ENCODE measurements at regions of chr11 and their contacts with region 1.

Region 1: DNA sequence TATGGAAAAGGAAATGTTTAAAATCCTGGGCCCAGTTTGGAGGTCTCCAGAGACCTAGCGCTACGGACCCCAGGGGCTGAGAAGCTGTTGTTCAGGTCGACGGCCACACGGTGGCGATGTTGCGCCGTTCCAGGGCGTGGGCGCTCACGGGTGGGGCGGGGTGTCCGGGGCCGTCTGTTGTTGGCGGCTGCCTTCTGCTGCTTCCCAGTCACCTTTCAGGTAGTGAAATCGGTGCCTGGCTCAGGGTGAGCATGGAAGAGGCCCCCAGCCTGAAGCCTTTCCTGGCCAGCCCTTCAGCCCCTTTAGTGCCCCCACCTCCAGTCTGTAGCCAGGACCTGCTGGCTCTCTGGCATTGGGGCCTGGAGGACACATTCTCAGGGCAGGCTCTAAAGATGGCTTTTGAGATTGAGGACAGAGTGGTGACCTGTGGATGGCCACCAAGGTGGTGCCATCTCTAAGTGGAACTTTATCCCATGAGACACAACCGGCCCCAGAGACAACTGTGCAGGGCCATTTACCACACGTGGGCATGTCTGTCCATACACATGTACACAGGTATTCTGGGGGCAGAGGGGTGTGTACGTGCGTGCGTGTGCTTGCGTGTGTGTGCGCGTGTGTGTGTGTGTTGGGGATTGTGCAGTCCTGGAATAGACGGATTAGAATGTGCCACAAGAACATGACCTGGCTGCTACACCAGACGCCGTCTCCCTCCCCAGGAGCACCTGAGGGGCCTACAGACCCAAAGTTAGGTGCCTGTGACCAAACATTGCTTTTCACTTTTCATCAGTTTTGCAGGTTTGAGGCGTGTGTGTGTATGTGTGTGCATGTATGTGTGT is 53.8 kb downstream of the ST14 start:
- DNase-seq: peak; percentile 81
- ATAC-seq: peak; percentile 98
- H3K4me3 ChIP-seq: no peak overlapping the region
- H3K4me3 Mint-ChIP-seq: no peak overlapping the region
- H3K27ac ChIP-seq: no peak overlapping the region
- H3K27ac Mint-ChIP-seq: peak overlapping the region; percentile 59
- H3K4me1 ChIP-seq: peaks cover 0 to 10% of the 10 kb centered on the region in 2 donors
- H3K4me1 Mint-ChIP-seq: peaks cover 11% of the 10 kb centered on the region
- H3K27me3 ChIP-seq: no peaks in the 10 kb centered on the region
- H3K27me3 Mint-ChIP-seq: peaks cover 4% of the 10 kb centered on the region
- CTCF ChIP-seq: peak; percentile 97

Region 2: GRCh38 chr11:129980086-129980485 is 233.3 kb before region 1 on chr11:
- CTCF ChIA-PET with region 1: no interaction called
- POLR2A ChIA-PET with region 1: interaction called, 14 read pairs
- intact Hi-C with region 1: no loop called
- DNase-seq: no peak
- ATAC-seq: no peak
- H3K4me3 ChIP-seq: no peak overlapping the region
- H3K4me3 Mint-ChIP-seq: no peak overlapping the region
- H3K27ac ChIP-seq: no peak overlapping the region
- H3K27ac Mint-ChIP-seq: no peak overlapping the region
- H3K4me1 ChIP-seq: no peaks in the 10 kb centered on the region
- H3K4me1 Mint-ChIP-seq: no peaks in the 10 kb centered on the region
- H3K27me3 ChIP-seq: peaks cover 0 to 19% (median 0%) of the 10 kb centered on the region in 4 experiments
- H3K27me3 Mint-ChIP-seq: peaks cover 12% of the 10 kb centered on the region
- CTCF ChIP-seq: no peak

Region 3: GRCh38 chr11:130145975-130146776 is 67.2 kb before region 1 on chr11:
- CTCF ChIA-PET with region 1: interaction called, 7 read pairs
- POLR2A ChIA-PET with region 1: no interaction called
- intact Hi-C with region 1: loop called (anchors 2 kb)
- DNase-seq: no peak
- ATAC-seq: peak; percentile 23
- H3K4me3 ChIP-seq: no peak overlapping the region
- H3K4me3 Mint-ChIP-seq: peak overlapping the region; percentile 30
- H3K27ac ChIP-seq: peak overlapping the region; percentile 61 to 75
- H3K27ac Mint-ChIP-seq: peak overlapping the region; percentile 68
- H3K4me1 ChIP-seq: peaks cover 16 to 34% of the 10 kb centered on the region in 2 donors
- H3K4me1 Mint-ChIP-seq: peaks cover 37% of the 10 kb centered on the region
- H3K27me3 ChIP-seq: no peaks in the 10 kb centered on the region
- H3K27me3 Mint-ChIP-seq: no peaks in the 10 kb centered on the region
- CTCF ChIP-seq: no peak

Region 4: GRCh38 chr11:130181295-130182272 is 31.8 kb before region 1 on chr11:
- CTCF ChIA-PET with region 1: interaction called, 13 read pairs
- POLR2A ChIA-PET with region 1: no interaction called
- intact Hi-C with region 1: no loop called
- DNase-seq: peak; percentile 79
- ATAC-seq: peak; percentile 84
- H3K4me3 ChIP-seq: no peak overlapping the region
- H3K4me3 Mint-ChIP-seq: peak overlapping the region; percentile 61
- H3K27ac ChIP-seq: peak overlapping the region; percentile 74 to 76
- H3K27ac Mint-ChIP-seq: peak overlapping the region; percentile 94
- H3K4me1 ChIP-seq: peaks cover 42 to 56% of the 10 kb centered on the region in 2 donors
- H3K4me1 Mint-ChIP-seq: peaks cover 56% of the 10 kb centered on the region
- H3K27me3 ChIP-seq: no peaks in the 10 kb centered on the region
- H3K27me3 Mint-ChIP-seq: no peaks in the 10 kb centered on the region
- CTCF ChIP-seq: no peak

Region 5: DNA sequence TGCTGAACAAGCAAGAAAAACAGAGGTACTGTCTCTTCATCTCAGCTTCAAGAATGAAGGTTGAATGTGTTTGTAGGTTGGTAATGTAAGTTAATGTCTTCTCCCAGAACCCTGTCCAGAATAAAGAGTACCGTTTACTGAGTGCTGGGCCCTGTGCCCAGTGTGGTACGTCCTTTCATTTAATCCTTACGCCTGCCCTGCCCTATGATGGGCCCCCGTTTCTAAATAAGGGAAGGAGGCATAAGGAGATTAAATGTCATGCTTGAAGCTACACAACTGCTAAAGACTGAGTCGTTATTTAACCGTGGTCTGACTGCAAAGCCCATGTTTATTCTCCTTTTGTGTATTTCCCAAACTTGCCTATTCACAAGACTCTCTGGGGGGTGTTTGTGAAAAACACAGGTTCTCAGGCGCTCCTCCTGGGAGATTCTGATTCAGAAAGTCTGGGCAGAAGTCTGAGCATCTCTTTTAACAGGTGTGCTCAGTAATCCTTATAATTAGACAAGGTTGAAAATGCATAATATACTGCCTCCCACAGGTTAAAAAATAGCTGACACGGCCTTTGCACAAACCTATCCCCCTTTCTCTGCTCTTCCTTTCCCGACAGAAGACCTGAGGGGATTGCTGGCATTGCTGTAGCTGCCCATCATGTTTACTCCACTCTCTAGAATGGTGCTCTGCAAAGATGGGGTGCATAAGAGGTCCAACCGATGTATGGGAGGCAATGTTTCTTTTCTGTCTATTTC is 157.7 kb after region 1 on chr11:
- CTCF ChIA-PET with region 1: interaction called, 29 read pairs
- POLR2A ChIA-PET with region 1: no interaction called
- intact Hi-C with region 1: loop called (anchors 1 kb)
- DNase-seq: no peak
- ATAC-seq: no peak
- H3K4me3 ChIP-seq: no peak overlapping the region
- H3K4me3 Mint-ChIP-seq: no peak overlapping the region
- H3K27ac ChIP-seq: no peak overlapping the region
- H3K27ac Mint-ChIP-seq: no peak overlapping the region
- H3K4me1 ChIP-seq: no peaks in the 10 kb centered on the region
- H3K4me1 Mint-ChIP-seq: no peaks in the 10 kb centered on the region
- H3K27me3 ChIP-seq: peaks cover 0 to 3% (median 0%) of the 10 kb centered on the region in 4 experiments
- H3K27me3 Mint-ChIP-seq: peaks cover 21% of the 10 kb centered on the region
- CTCF ChIP-seq: no peak

Region 6: GRCh38 chr11:130434521-130435223 is 221.3 kb after region 1 on chr11:
- CTCF ChIA-PET with region 1: interaction called, 46 read pairs
- POLR2A ChIA-PET with region 1: no interaction called
- intact Hi-C with region 1: loop called (anchors 1 kb)
- DNase-seq: peak; percentile 83
- ATAC-seq: peak; percentile 88
- H3K4me3 ChIP-seq: peak overlapping the region; percentile 52 to 95 (median 73)
- H3K4me3 Mint-ChIP-seq: no peak overlapping the region
- H3K27ac ChIP-seq: no peak overlapping the region
- H3K27ac Mint-ChIP-seq: no peak overlapping the region
- H3K4me1 ChIP-seq: peaks cover 4% of the 10 kb centered on the region in 2 donors
- H3K4me1 Mint-ChIP-seq: peaks cover 3% of the 10 kb centered on the region
- H3K27me3 ChIP-seq: peaks cover 0 to 12% (median 7%) of the 10 kb centered on the region in 4 experiments
- H3K27me3 Mint-ChIP-seq: peaks cover 41% of the 10 kb centered on the region
- CTCF ChIP-seq: peak; percentile 96

Measured in B cell (primary cell).